Activated CD4-positive, alpha-beta memory T cell treated with anti-CD3 and anti-CD28 coated beads, Interleukin-2, amount 10 ng/mL, durations not matched to agents 7 days and 5 days (primary cell): ENCODE measurements at regions of chr13 and their contacts with region 1.

Region 1: GRCh38 chr13:79541426-79542049 is 60.6 kb downstream of the NDFIP2 start:
- DNase-seq: no peak
- H3K4me3 Mint-ChIP-seq: no peak overlapping the region
- H3K27ac Mint-ChIP-seq: no peak overlapping the region
- H3K4me1 Mint-ChIP-seq: peaks cover 3% of the 10 kb centered on the region
- H3K27me3 Mint-ChIP-seq: no peaks in the 10 kb centered on the region

Region 2: GRCh38 chr13:79528759-79529191 is 12.8 kb before region 1 on chr13:
- CTCF ChIA-PET with region 1: interaction called, 19 read pairs
- POLR2A ChIA-PET with region 1: no interaction called
- DNase-seq: no peak
- H3K4me3 Mint-ChIP-seq: no peak overlapping the region
- H3K27ac Mint-ChIP-seq: no peak overlapping the region
- H3K4me1 Mint-ChIP-seq: peaks cover 24% of the 10 kb centered on the region
- H3K27me3 Mint-ChIP-seq: no peaks in the 10 kb centered on the region

Region 3: GRCh38 chr13:79581870-79582315 is 40.4 kb after region 1 on chr13:
- CTCF ChIA-PET with region 1: no interaction called
- POLR2A ChIA-PET with region 1: no interaction called
- DNase-seq: no peak
- H3K4me3 Mint-ChIP-seq: no peak overlapping the region
- H3K27ac Mint-ChIP-seq: no peak overlapping the region
- H3K4me1 Mint-ChIP-seq: no peaks in the 10 kb centered on the region
- H3K27me3 Mint-ChIP-seq: no peaks in the 10 kb centered on the region